ENCODE measurements at regions of chr1 and their contacts with region 1.

Region 1: GRCh38 chr1:69929308-69930057 is 275.9 kb downstream of the LRRC40 start:
- DNase-seq: no peak

Region 2: GRCh38 chr1:70587872-70588366 is 658.4 kb after region 1 on chr1:
- intact Hi-C with region 1: loop called in 1 of 2 experiments (anchors 5 kb)
- DNase-seq: no peak